PC-3 (cell line): ENCODE measurements at regions of chr14 and their contacts with region 1.

Region 1: GRCh38 chr14:70873627-70874026 is 33.6 kb upstream of the PCNX1 start:
- DNase-seq: no peak
- ATAC-seq: peak; percentile 46; the same call in 1 of the 2 replicates
- H3K4me3 ChIP-seq: no peak overlapping the region
- H3K27ac ChIP-seq: no peak overlapping the region
- H3K4me1 ChIP-seq: no peaks in the 10 kb centered on the region
- H3K27me3 ChIP-seq: no peaks in the 10 kb centered on the region
- CTCF ChIP-seq: no peak

Region 2: GRCh38 chr14:70888681-70889175 is 15.1 kb after region 1 on chr14:
- CTCF ChIA-PET with region 1: interaction called, 10 read pairs
- POLR2A ChIA-PET with region 1: no interaction called
- intact Hi-C with region 1: no loop called
- DNase-seq: peak; percentile 12
- ATAC-seq: peak; percentile 12
- H3K4me3 ChIP-seq: no peak overlapping the region
- H3K27ac ChIP-seq: no peak overlapping the region
- H3K4me1 ChIP-seq: no peaks in the 10 kb centered on the region
- H3K27me3 ChIP-seq: peaks cover 16% of the 10 kb centered on the region; the same call in 1 of the 2 replicates
- CTCF ChIP-seq: no peak